ENCODE measurements at regions of chr5 and their contacts with region 1.

Region 1: GRCh38 chr5:35799753-35800152 is 56.9 kb upstream of the IL7R start:
- DNase-seq: no peak
- ATAC-seq: no peak
- H3K4me3 Mint-ChIP-seq: no peak overlapping the region
- H3K27ac Mint-ChIP-seq: no peak overlapping the region
- H3K4me1 Mint-ChIP-seq: peaks cover 54% of the 10 kb centered on the region
- H3K27me3 Mint-ChIP-seq: no peaks in the 10 kb centered on the region

Region 2: DNA sequence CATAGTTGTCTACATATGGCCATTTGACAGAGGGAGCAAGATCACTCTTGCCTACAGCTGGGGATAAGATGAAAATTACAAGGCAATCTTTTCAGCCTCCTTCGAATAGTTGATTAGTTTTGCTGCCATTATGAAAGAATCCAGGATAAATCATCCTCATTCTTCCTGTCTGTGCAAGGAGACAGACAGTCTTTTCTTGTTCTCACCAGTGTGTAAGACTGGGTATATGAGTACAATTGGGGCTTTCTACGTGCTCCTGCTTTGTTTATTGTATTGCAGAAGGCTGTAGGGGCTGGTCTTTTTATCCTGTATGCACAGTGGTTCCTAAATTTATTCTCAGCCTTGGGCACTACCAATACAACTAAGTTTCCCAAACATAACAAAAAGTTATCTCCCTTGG is 105.3 kb before region 1 on chr5:
- CTCF ChIA-PET with region 1: no interaction called
- DNase-seq: no peak
- ATAC-seq: no peak
- H3K4me3 Mint-ChIP-seq: no peak overlapping the region
- H3K27ac Mint-ChIP-seq: no peak overlapping the region
- H3K4me1 Mint-ChIP-seq: no peaks in the 10 kb centered on the region
- H3K27me3 Mint-ChIP-seq: no peaks in the 10 kb centered on the region

Region 3: GRCh38 chr5:35785601-35786085 is 14.1 kb before region 1 on chr5:
- CTCF ChIA-PET with region 1: interaction called, 11 read pairs
- DNase-seq: peak; percentile 56
- ATAC-seq: peak; percentile 75
- H3K4me3 Mint-ChIP-seq: peak overlapping the region; percentile 14
- H3K27ac Mint-ChIP-seq: peak overlapping the region; percentile 90
- H3K4me1 Mint-ChIP-seq: peaks cover 73% of the 10 kb centered on the region
- H3K27me3 Mint-ChIP-seq: no peaks in the 10 kb centered on the region

Region 4: GRCh38 chr5:35811108-35811741 is 11.5 kb after region 1 on chr5:
- CTCF ChIA-PET with region 1: interaction called, 16 read pairs
- DNase-seq: peak; percentile 79
- ATAC-seq: peak; percentile 80
- H3K4me3 Mint-ChIP-seq: peak overlapping the region; percentile 48
- H3K27ac Mint-ChIP-seq: peak overlapping the region; percentile 92
- H3K4me1 Mint-ChIP-seq: peaks cover 51% of the 10 kb centered on the region
- H3K27me3 Mint-ChIP-seq: no peaks in the 10 kb centered on the region

Region 5: DNA sequence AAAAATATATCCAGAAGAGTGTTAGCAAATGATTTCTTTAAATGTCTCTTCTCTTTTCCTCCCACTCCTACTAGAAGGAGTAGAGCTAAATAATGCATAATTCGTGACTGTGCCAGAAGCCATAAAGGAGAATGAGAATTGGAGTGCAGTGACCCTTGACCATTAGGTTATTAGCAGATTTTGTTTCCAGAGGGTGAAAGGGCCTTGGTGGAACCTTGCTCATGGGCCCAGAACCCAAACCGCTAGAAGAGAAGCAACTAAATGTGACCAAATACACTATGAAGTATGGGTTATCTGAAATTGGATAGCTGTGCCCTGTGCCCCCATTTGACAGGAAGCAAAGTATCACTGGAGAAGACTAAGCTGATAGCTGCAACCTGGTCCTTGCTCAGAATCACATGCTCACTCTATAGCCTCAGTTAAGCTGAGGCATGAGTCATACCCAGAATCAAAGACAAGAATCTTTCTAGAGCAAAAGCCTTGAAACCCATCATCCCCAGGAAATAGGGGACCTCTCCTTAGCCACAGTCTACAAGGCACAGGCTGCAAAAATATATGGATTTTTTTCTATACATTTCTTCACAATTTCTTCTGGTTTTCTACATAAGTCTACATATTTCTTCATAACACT is 102.4 kb after region 1 on chr5:
- CTCF ChIA-PET with region 1: no interaction called
- DNase-seq: peak; percentile 70
- ATAC-seq: peak; percentile 88
- H3K4me3 Mint-ChIP-seq: peak overlapping the region; percentile 20
- H3K27ac Mint-ChIP-seq: peak overlapping the region; percentile 37
- H3K4me1 Mint-ChIP-seq: peaks cover 76% of the 10 kb centered on the region
- H3K27me3 Mint-ChIP-seq: no peaks in the 10 kb centered on the region

Measured in activated CD8-positive, alpha-beta memory T cell treated with anti-CD3 and anti-CD28 coated beads, Interleukin-2, amount 10 ng/mL, durations not matched to agents 7 days and 5 days (primary cell).